Activated naive CD4-positive, alpha-beta T cell treated with anti-CD3 and anti-CD28 coated beads for 36 hours (primary cell): ENCODE measurements at regions of chr4 and their contacts with region 1.

Region 1: GRCh38 chr4:109441862-109442458 is 8.3 kb downstream of the SEC24B start:
- DNase-seq: no peak
- H3K4me3 Mint-ChIP-seq: no peak overlapping the region
- H3K27ac Mint-ChIP-seq: no peak overlapping the region
- H3K4me1 Mint-ChIP-seq: peaks cover 67% of the 10 kb centered on the region
- H3K27me3 Mint-ChIP-seq: no peaks in the 10 kb centered on the region

Region 2: DNA sequence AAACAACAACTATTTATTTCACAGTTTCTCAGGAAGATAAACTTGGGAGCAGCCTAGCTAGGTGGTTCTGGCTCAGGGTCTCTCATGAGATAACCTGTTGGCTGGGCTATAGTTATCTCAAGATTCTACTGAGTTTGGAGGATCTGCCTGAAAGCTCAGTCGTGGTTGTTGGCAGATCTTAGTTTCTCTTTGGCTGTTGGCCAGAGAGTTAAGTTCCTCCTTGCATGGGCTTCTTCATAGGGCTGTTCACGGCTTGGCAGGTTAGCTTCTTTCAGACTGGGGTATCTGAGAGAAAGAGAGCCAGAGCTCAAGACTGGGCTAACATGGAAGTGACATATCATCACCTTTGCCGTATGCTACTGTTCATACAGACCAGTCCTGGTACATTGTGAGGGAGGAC is 20.3 kb after region 1 on chr4:
- CTCF ChIA-PET with region 1: no interaction called
- intact Hi-C with region 1: loop called (anchors 2 kb)
- DNase-seq: no peak
- H3K4me3 Mint-ChIP-seq: no peak overlapping the region
- H3K27ac Mint-ChIP-seq: no peak overlapping the region
- H3K4me1 Mint-ChIP-seq: peaks cover 17% of the 10 kb centered on the region
- H3K27me3 Mint-ChIP-seq: no peaks in the 10 kb centered on the region